CD8-positive, alpha-beta memory T cell (primary cell): ENCODE measurements at regions of chr18 and their contacts with region 1.

Region 1: GRCh38 chr18:2606335-2606734 is 35.0 kb downstream of the NDC80 start:
- DNase-seq: peak in 2 of 5 donors; percentile 44 to 46
- H3K4me3 ChIP-seq: no peak overlapping the region
- H3K4me3 Mint-ChIP-seq: peak overlapping the region; percentile 61 to 78 (median 71)
- H3K27ac ChIP-seq: peak overlapping the region; percentile 3
- H3K27ac Mint-ChIP-seq: peak overlapping the region; percentile 61 to 95 (median 92)
- H3K4me1 ChIP-seq: peaks cover 38% of the 10 kb centered on the region
- H3K4me1 Mint-ChIP-seq: peaks cover 49 to 72% (median 64%) of the 10 kb centered on the region in 3 donors
- H3K27me3 ChIP-seq: no peaks in the 10 kb centered on the region
- H3K27me3 Mint-ChIP-seq: no peaks in the 10 kb centered on the region

Region 2: DNA sequence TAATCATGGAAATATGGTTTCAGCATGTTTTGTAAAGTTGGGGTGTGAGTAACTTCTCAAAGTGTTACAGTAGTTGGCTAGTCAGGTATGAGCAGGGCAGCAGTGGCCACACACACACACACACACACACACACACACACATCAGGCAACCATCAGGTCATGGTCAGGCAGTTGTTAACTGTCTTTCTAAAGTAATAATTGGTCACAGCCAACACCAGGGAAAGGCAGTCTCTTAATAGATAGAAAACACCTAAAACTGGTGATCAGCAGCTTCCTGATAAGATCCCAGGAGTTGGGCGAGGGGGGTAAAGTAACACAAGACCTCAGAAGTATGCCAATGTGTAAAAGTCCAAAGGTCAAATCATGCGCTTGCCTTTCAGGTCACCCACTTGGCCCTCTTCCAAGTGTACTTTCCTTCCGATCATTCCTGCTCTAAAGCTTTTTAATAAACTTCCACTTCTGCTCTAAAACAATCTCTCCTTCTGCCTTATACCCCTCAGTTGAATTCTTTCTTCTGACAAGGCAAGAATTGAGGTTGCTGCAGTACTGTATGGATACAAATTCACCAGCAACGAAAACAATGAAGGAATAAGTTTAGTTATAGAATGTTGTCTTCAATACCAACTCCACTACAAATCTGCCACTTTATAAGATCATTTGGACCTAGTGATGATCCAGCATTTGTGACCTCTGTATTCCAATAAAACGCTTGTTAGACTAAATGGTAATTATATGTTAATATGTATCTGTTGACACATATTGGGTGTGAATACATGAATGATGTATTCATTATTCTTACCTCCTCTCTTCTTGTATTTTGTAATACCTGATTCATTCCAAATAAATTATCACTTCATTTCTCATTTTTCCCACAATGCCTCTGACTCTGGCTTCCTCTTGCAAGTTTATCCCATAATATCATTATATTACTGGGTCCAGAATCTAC is 289.3 kb before region 1 on chr18:
- CTCF ChIA-PET with region 1: no interaction called
- POLR2A ChIA-PET with region 1: no interaction called
- DNase-seq: no peak
- H3K4me3 ChIP-seq: no peak overlapping the region
- H3K4me3 Mint-ChIP-seq: no peak overlapping the region
- H3K27ac ChIP-seq: no peak overlapping the region
- H3K27ac Mint-ChIP-seq: no peak overlapping the region
- H3K4me1 ChIP-seq: no peaks in the 10 kb centered on the region
- H3K4me1 Mint-ChIP-seq: no peaks in the 10 kb centered on the region
- H3K27me3 ChIP-seq: no peaks in the 10 kb centered on the region
- H3K27me3 Mint-ChIP-seq: peaks cover 16 to 54% of the 10 kb centered on the region in 2 donors

Region 3: GRCh38 chr18:2636126-2636631 is 29.8 kb after region 1 on chr18:
- CTCF ChIA-PET with region 1: interaction called, 34 read pairs
- POLR2A ChIA-PET with region 1: interaction called, 60 read pairs
- DNase-seq: no peak
- H3K4me3 ChIP-seq: peak overlapping the region; percentile 51
- H3K4me3 Mint-ChIP-seq: peak overlapping the region; percentile 81 to 88 (median 86)
- H3K27ac ChIP-seq: peak overlapping the region; percentile 82
- H3K27ac Mint-ChIP-seq: peak overlapping the region; percentile 97 to 99 (median 98)
- H3K4me1 ChIP-seq: peaks cover 68% of the 10 kb centered on the region
- H3K4me1 Mint-ChIP-seq: peaks cover 93 to 100% (median 95%) of the 10 kb centered on the region in 3 donors
- H3K27me3 ChIP-seq: no peaks in the 10 kb centered on the region
- H3K27me3 Mint-ChIP-seq: no peaks in the 10 kb centered on the region

Region 4: GRCh38 chr18:2797951-2798350 is 191.6 kb after region 1 on chr18:
- CTCF ChIA-PET with region 1: no interaction called
- POLR2A ChIA-PET with region 1: no interaction called
- DNase-seq: no peak
- H3K4me3 ChIP-seq: no peak overlapping the region
- H3K4me3 Mint-ChIP-seq: no peak overlapping the region
- H3K27ac ChIP-seq: no peak overlapping the region
- H3K27ac Mint-ChIP-seq: peak overlapping the region in 1 of 8 donors; percentile 9
- H3K4me1 ChIP-seq: no peaks in the 10 kb centered on the region
- H3K4me1 Mint-ChIP-seq: peaks cover 5 to 25% (median 18%) of the 10 kb centered on the region in 3 donors
- H3K27me3 ChIP-seq: no peaks in the 10 kb centered on the region
- H3K27me3 Mint-ChIP-seq: no peaks in the 10 kb centered on the region

Region 5: DNA sequence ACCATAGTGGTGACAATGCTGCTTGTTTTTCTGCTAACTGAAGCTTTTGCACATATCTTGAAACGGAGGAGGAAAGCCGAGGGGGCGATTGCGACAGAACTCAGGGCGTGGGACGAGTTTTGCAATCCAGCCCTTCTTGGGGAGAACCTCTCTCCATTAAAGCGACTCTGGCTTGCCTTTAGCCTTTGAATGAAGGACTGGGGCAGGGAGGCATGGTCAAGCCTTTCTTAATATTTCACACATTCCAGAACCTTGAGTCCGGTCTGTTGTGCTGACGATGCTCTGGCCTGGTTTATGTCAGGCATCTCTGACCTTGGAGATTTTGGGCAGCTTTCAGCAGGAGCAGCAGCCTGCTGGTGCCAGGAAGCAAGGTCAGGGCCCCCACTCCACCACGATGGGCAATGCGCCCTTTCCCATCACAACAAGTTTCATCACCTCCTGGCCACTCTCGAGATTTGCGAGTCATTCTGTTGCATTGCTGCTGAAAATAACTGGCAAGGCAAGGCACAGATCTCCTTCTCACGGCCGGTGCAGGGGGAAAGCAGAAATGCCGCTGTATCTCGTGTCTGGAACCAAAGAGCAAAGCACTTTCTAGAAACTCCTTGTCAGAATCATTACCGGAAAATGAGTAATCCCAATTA is 251.3 kb after region 1 on chr18:
- CTCF ChIA-PET with region 1: no interaction called
- POLR2A ChIA-PET with region 1: no interaction called
- DNase-seq: no peak
- H3K4me3 ChIP-seq: no peak overlapping the region
- H3K4me3 Mint-ChIP-seq: no peak overlapping the region
- H3K27ac ChIP-seq: no peak overlapping the region
- H3K27ac Mint-ChIP-seq: no peak overlapping the region
- H3K4me1 ChIP-seq: no peaks in the 10 kb centered on the region
- H3K4me1 Mint-ChIP-seq: peaks cover 0 to 4% (median 2%) of the 10 kb centered on the region in 3 donors
- H3K27me3 ChIP-seq: no peaks in the 10 kb centered on the region
- H3K27me3 Mint-ChIP-seq: peaks cover 1 to 27% of the 10 kb centered on the region in 2 donors